ENCODE measurements at regions of chr10 and their contacts with region 1.

Region 1: DNA sequence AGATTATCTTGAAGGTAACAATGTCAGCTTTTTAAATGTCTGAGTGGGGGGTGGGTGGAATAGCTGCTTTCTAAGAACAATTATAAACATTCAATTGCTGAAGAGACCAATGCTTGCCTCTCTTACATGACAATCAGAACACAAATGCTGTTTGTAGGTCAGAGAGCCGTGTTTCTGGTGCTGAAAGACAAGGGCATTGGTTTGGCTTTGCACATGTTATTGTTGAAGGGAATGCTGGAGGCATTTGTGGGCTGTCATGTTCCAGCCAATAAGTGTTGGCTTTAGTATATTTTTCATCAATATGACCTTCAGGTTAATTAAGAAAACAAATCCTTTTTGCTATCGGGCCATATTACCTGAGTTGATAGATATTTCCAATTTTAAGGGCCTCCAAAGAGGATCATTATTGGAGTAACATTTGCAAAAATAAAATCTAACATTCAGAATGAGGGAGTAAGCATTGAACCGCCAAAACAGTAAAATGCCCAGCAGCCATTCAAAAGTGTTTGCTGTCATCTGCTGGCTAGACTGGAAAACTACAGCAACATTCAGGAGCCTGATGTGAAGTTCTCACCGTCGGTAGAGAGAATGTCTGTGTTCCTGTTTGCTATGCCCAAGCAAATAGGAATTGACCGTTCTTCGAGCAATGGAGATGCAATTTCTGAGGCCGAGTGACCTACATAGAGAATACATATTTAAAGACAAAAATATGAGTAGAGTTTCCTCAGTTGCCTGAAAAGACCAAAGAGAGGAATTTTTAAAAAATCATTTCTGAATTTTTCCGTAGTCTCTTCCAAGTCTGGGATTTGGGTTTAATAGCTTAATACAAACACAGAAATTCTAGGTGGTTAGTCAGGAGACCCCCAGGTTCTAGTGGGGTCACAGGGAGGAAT is 118.9 kb downstream of the APBB1IP start:
- DNase-seq: peak in 26 of 35 experiments; percentile 8 to 71 (median 27)
- ATAC-seq: peak; percentile 32 to 65 (median 40)
- H3K4me3 ChIP-seq: no peak overlapping the region
- H3K4me3 Mint-ChIP-seq: no peak overlapping the region
- H3K27ac ChIP-seq: no peak overlapping the region
- H3K27ac Mint-ChIP-seq: peak overlapping the region in 1 of 2 donors; percentile 79
- H3K4me1 ChIP-seq: no peaks in the 10 kb centered on the region
- H3K4me1 Mint-ChIP-seq: peaks cover 12 to 22% (median 21%) of the 10 kb centered on the region in 3 donors
- H3K27me3 ChIP-seq: no peaks in the 10 kb centered on the region
- H3K27me3 Mint-ChIP-seq: no peaks in the 10 kb centered on the region

Region 2: DNA sequence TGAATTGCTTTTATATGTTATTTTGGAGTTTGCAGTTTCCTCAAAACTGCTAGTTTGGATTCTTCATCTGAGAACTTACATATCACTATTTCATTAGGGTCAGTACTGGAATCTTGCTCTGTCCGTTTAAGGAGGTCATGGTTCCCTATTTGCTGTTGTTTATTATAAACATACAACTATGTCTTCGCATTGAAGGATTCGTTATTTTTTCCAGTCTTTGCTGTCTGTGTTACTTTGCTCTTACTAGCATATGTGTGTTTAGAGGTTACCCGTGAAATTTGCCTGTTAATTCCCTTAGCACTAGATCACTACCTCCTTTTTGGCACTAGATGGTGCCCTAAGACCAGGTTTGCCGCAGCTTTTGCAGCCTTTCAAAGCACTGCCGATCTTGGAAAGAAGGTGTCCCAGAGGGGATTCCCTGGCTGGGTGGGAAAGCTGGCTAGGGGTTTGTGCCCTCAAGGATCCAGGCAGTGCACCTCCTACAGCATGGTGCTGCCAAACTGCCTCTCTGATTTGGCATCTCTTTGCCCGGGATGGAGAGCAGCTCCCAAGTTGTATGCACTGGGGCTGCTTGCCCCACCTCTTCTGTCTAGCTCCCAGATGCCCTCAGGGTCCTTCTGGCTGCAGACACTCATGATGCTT is 221.9 kb before region 1 on chr10:
- CTCF ChIA-PET with region 1: interaction called, 14 to 31 read pairs
- POLR2A ChIA-PET with region 1: no interaction called
- DNase-seq: peak; percentile 28 to 85 (median 52)
- ATAC-seq: peak; percentile 85 to 92 (median 87)
- H3K4me3 ChIP-seq: peak overlapping the region; percentile 57 to 67
- H3K4me3 Mint-ChIP-seq: peak overlapping the region; percentile 75 to 83 (median 81)
- H3K27ac ChIP-seq: no peak overlapping the region
- H3K27ac Mint-ChIP-seq: peak overlapping the region; percentile 21 to 56
- H3K4me1 ChIP-seq: peaks cover 0 to 5% of the 10 kb centered on the region in 2 experiments
- H3K4me1 Mint-ChIP-seq: peaks cover 6 to 9% (median 8%) of the 10 kb centered on the region in 3 donors
- H3K27me3 ChIP-seq: peaks cover 0 to 4% of the 10 kb centered on the region in 2 experiments
- H3K27me3 Mint-ChIP-seq: no peaks in the 10 kb centered on the region

Region 3: DNA sequence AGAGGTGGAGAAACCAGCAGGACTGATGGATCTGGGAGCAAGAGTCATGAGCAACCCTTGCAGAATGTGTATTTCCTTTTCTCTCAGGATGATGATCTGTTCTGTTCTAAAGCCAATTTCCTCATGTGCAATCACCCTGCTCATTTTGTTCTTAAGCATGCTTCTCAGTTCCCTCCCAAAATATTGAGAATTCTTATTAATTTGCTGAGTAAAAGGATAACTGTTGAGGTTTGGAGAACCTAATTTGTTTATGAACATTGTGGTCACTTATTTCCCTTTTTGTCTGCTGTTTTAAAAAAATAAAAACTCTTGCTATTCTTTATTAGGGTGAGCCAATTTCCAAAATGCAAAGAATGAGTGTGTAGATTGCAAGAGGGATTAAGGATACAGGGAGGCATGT is 12.1 kb before region 1 on chr10:
- CTCF ChIA-PET with region 1: no interaction called
- POLR2A ChIA-PET with region 1: no interaction called
- DNase-seq: no peak
- ATAC-seq: no peak
- H3K4me3 ChIP-seq: no peak overlapping the region
- H3K4me3 Mint-ChIP-seq: no peak overlapping the region
- H3K27ac ChIP-seq: no peak overlapping the region
- H3K27ac Mint-ChIP-seq: peak overlapping the region; percentile 27 to 96
- H3K4me1 ChIP-seq: peaks cover 0 to 9% of the 10 kb centered on the region in 2 experiments
- H3K4me1 Mint-ChIP-seq: peaks cover 24 to 35% (median 25%) of the 10 kb centered on the region in 3 donors
- H3K27me3 ChIP-seq: no peaks in the 10 kb centered on the region
- H3K27me3 Mint-ChIP-seq: no peaks in the 10 kb centered on the region

Region 4: GRCh38 chr10:27784272-27784671 is 1227.3 kb after region 1 on chr10:
- CTCF ChIA-PET with region 1: no interaction called
- POLR2A ChIA-PET with region 1: interaction called in 1 of 2 experiments, 10 read pairs
- DNase-seq: no peak
- ATAC-seq: no peak
- H3K4me3 ChIP-seq: no peak overlapping the region
- H3K4me3 Mint-ChIP-seq: no peak overlapping the region
- H3K27ac ChIP-seq: no peak overlapping the region
- H3K27ac Mint-ChIP-seq: no peak overlapping the region
- H3K4me1 ChIP-seq: no peaks in the 10 kb centered on the region
- H3K4me1 Mint-ChIP-seq: no peaks in the 10 kb centered on the region
- H3K27me3 ChIP-seq: peaks cover 0 to 18% of the 10 kb centered on the region in 2 experiments
- H3K27me3 Mint-ChIP-seq: peaks cover 26 to 28% of the 10 kb centered on the region in 2 donors